Gastrocnemius medialis (tissue), 4 donors: ENCODE measurements at regions of chr1 and their contacts with region 1.

Region 1: GRCh38 chr1:244874974-244875579 is 10.7 kb upstream of the HNRNPU start:
- DNase-seq: no peak
- ATAC-seq: no peak
- H3K4me3 ChIP-seq: no peak overlapping the region
- H3K27ac ChIP-seq: no peak overlapping the region
- H3K4me1 ChIP-seq: no peaks in the 10 kb centered on the region
- H3K27me3 ChIP-seq: no peaks in the 10 kb centered on the region
- CTCF ChIP-seq: no peak
- POLR2A ChIP-seq: no peak

Region 2: GRCh38 chr1:244821134-244821533 is 53.9 kb before region 1 on chr1:
- in situ Hi-C with region 1: loop called in 1 of 4 experiments (anchors 10 kb)
- intact Hi-C with region 1: no loop called
- DNase-seq: no peak
- ATAC-seq: no peak
- H3K4me3 ChIP-seq: no peak overlapping the region
- H3K27ac ChIP-seq: no peak overlapping the region
- H3K4me1 ChIP-seq: no peaks in the 10 kb centered on the region
- H3K27me3 ChIP-seq: no peaks in the 10 kb centered on the region
- CTCF ChIP-seq: no peak
- POLR2A ChIP-seq: no peak